Common myeloid progenitor, CD34-positive (primary cell): ENCODE measurements at regions of chr2 and their contacts with region 1.

Region 1: DNA sequence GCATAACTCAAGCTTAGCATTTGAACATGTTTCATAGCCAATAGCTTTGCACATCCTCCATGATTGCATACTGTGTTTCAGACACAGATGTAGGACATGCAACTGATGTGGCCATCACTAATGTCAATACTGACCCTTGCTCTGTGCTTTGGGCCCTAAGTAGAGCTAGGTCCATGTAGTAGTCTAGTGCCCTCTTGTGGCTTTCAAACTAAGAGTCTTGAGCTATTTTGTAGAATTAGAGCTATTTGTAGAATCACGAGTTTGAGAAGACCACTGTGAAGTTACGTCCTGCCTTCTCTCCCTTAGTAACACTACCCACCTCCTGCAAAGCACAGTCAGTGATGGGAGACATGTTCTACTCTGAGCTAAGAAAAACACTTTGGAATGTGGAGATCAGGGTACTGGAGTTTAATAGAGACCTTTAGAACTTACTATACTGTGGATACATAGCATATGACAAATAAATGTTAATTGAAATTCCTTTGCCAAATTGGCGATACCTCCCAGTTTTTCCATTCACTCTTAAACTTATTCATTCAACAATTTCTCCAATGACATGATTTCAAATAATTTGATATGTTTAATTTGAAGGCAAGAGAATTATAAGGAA is 306.5 kb upstream of the TNP1 start:
- DNase-seq: peak; percentile 47 to 60 (median 58)
- H3K4me3 ChIP-seq: no peak overlapping the region
- H3K27ac ChIP-seq: no peak overlapping the region
- H3K4me1 ChIP-seq: peaks cover 12 to 18% (median 15%) of the 10 kb centered on the region in 4 experiments
- H3K27me3 ChIP-seq: peaks cover 0 to 3% (median 0%) of the 10 kb centered on the region in 5 experiments

Region 2: GRCh38 chr2:216698895-216699294 is 467.5 kb before region 1 on chr2:
- CTCF ChIA-PET with region 1: interaction called, 49 read pairs
- POLR2A ChIA-PET with region 1: no interaction called
- DNase-seq: peak; percentile 59 to 75 (median 75)
- H3K4me3 ChIP-seq: no peak overlapping the region
- H3K27ac ChIP-seq: no peak overlapping the region
- H3K4me1 ChIP-seq: peaks cover 0 to 18% (median 9%) of the 10 kb centered on the region in 4 experiments
- H3K27me3 ChIP-seq: peaks cover 0 to 53% (median 39%) of the 10 kb centered on the region in 5 experiments

Region 3: DNA sequence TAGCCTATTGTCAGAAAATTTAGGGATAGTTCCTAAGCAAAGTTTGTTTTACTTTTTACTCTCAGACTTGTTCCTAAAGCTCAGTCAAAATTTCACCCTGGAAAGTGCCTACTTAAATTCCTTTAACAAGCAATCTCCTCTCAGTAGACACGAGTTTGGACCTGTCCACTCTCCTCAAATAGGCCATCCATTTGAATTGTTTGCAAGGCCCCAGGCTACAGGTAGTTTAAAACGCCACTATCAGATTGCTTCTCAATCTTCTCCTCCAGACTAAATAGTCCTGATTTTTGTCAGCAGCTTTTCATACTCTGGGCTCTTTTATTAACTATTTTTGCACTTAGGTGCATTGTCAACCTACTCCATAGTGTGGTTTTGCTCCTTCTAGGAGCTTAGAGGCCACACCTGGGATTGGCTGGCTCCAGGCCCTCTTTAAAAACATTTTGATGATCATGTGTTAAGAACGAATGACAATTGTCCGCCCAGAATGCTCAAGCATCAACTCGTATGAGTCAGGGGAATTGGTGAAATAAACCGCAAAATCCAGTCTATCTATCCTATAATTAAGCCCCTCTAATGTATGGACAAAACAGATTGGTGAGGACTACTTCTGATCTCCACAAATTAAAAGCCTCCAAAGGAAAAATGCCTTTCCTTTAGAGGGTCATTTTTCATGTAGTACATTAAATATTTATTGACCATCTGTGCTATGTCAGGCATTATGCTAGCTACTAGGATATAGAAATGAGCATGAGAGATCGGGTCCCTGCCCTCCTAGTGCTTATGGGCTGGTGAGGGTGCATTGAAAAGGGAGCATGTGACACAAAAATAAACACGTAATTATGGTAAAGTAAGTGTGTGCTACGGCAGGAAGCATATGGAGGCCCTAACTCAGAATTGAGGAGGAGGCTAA is 27.3 kb after region 1 on chr2:
- CTCF ChIA-PET with region 1: no interaction called
- POLR2A ChIA-PET with region 1: no interaction called
- DNase-seq: no peak
- H3K4me3 ChIP-seq: no peak overlapping the region
- H3K27ac ChIP-seq: no peak overlapping the region
- H3K4me1 ChIP-seq: no peaks in the 10 kb centered on the region
- H3K27me3 ChIP-seq: peaks cover 0 to 10% (median 0%) of the 10 kb centered on the region in 5 experiments

Region 4: DNA sequence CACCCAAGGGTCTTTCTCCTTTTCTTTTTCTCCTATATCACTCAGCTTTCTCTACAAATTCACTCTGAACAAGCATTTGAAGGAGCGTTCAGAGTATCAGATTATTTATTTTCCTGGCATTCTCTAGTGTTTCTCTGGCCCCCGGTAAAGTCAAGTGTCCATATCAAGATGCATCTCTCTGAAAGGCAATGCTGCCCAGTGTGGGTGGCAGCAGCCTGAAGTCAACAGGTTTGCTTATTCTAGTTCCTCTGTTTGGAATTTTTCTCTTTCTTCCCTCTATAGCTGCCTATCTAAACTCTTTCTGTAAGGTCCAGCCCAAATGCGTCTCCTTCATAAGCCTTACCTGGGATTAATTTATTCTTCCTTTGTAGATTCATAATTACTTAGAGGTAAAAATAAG is 219.7 kb after region 1 on chr2:
- CTCF ChIA-PET with region 1: no interaction called
- POLR2A ChIA-PET with region 1: no interaction called
- DNase-seq: no peak
- H3K4me3 ChIP-seq: no peak overlapping the region
- H3K27ac ChIP-seq: no peak overlapping the region
- H3K4me1 ChIP-seq: peaks cover 0 to 12% (median 10%) of the 10 kb centered on the region in 4 experiments
- H3K27me3 ChIP-seq: peaks cover 0 to 5% (median 0%) of the 10 kb centered on the region in 5 experiments